Caco-2 (cell line): ENCODE measurements at regions of chr3 and their contacts with region 1.

Region 1: GRCh38 chr3:98522244-98523090 is at the start of gene CLDND1:
- DNase-seq: peak; percentile 95
- H3K4me3 ChIP-seq: peak within 1 kb of the TSS; percentile 64
- H3K4me3 Mint-ChIP-seq: peak within 1 kb of the TSS; percentile 84
- H3K27ac Mint-ChIP-seq: peak within 1 kb of the TSS; percentile 84
- H3K4me1 ChIP-seq: no peaks in the 10 kb centered on the region
- H3K4me1 Mint-ChIP-seq: no peaks in the 10 kb centered on the region
- H3K27me3 ChIP-seq: no peaks in the 10 kb centered on the region
- H3K27me3 Mint-ChIP-seq: no peaks in the 10 kb centered on the region
- CTCF ChIP-seq: no peak
- total RNA-seq, gene CLDND1: 56.0 TPM in 2 replicates

Region 2: GRCh38 chr3:98504539-98504938 is 17.9 kb before region 1 on chr3:
- CTCF ChIA-PET with region 1: no interaction called
- POLR2A ChIA-PET with region 1: no interaction called
- intact Hi-C with region 1: loop called (anchors 1 kb)
- DNase-seq: peak in 1 of 2 experiments; percentile 17
- H3K4me3 ChIP-seq: no peak overlapping the region
- H3K4me3 Mint-ChIP-seq: no peak overlapping the region
- H3K27ac Mint-ChIP-seq: no peak overlapping the region
- H3K4me1 ChIP-seq: peaks cover 14% of the 10 kb centered on the region; the same call in 1 of the 2 replicates
- H3K4me1 Mint-ChIP-seq: peaks cover 10% of the 10 kb centered on the region
- H3K27me3 ChIP-seq: no peaks in the 10 kb centered on the region
- H3K27me3 Mint-ChIP-seq: no peaks in the 10 kb centered on the region
- CTCF ChIP-seq: no peak

Region 3: DNA sequence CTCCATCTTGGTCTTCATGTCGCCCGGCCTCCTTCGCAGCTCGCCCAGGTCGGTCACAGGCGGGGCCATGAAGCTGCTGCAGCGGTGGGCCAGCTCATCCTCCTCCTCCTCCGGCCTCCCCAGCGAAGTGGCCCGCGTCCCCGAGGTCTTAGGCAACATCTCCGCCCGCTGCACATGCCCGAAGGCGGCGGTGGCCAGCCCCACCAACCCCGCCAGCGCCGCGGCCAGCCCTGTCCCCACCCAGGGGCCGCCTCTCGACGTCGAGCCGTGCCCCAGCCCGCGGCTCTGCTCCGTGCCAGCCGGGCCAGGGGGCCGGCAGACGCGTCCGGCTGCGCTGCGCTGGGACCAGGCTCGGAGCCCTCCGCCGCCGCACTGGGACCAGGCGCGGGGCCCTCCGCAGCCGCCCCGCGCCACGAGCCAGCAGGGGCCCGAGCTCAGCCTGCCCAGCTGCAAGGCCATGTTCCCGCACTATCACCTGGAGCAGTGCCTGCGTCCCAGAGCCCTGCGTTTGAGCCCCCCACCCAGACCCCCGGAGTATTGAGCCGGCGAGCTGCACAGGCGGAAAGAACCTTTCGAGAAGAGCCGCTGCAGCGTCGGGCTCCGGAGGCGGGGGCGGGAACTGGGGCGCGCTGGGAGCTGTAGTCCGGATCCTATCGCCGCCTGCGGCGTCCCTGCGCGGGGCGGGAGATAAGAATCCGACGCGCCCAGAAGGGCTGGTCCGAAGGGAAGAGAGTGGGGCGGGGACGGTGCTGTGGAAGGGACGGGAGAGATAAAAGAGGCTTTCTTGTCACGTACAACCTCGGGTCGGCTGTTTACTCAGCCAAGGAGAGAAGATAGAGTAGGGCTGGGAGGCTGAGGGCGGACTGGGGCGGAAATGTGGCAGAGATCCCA is 70.8 kb after region 1 on chr3 and contains the start of gene CPOX:
- CTCF ChIA-PET with region 1: no interaction called
- POLR2A ChIA-PET with region 1: interaction called, 6 read pairs
- intact Hi-C with region 1: loop called (anchors 1 kb)
- DNase-seq: peak; percentile 90 to 94
- H3K4me3 ChIP-seq: peak within 1 kb of the TSS; percentile 91
- H3K4me3 Mint-ChIP-seq: peak within 1 kb of the TSS; percentile 97
- H3K27ac Mint-ChIP-seq: peak within 1 kb of the TSS; percentile 55
- H3K4me1 ChIP-seq: peaks cover 13% of the 10 kb centered on the region
- H3K4me1 Mint-ChIP-seq: peaks cover 11% of the 10 kb centered on the region
- H3K27me3 ChIP-seq: no peaks in the 10 kb centered on the region
- H3K27me3 Mint-ChIP-seq: no peaks in the 10 kb centered on the region
- CTCF ChIP-seq: no peak
- total RNA-seq, gene CPOX: 24.2 and 25.0 TPM in 2 replicates